ENCODE measurements at regions of chr12 and their contacts with region 1.

Region 1: DNA sequence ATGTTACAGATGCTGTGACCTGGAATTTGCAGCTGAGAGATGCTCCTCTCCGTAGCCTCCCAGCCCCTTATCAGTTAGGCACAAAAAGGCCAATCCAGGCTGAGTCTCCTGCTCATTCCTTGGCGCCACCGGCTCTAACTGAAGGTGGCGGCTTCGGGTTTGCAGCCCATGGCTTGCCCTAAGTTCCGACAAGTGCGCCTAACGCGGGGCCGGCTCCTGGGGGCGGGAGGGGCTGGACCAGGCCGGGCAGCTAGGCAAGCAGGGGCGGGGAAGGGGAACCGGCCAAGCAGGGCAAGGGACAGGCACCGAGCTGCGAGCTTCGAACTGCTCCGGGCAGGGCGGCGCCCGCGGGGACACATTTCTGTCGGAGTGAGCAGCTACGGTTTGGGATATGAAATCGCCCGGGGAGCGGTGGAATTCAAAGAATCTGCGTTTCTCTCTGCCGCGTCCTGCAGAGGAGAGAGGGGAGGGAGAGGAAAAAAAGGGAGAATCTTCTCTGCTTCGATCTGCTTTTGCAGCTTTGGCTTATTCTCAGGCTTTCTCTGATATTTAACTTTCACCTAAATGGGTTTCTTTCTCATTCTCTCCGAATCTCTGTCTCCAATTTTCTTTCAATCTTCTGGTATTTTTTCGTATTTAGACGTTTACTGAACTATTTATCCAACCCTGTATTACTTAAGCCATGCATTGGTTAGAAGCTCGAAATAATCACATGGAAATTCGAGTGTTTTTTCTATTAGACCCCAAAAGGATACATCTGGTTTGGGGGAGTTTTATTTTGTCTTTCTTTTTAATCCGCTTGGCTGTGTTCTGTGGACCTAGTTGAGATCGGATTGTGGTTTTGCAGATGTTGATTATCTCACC is 1.6 kb upstream of the HOXC12 start:
- DNase-seq: no peak
- H3K4me3 Mint-ChIP-seq: no peak overlapping the region
- H3K27ac Mint-ChIP-seq: peak overlapping the region; percentile 60
- H3K4me1 Mint-ChIP-seq: peaks cover 5% of the 10 kb centered on the region
- H3K27me3 Mint-ChIP-seq: peaks cover 83% of the 10 kb centered on the region

Region 2: GRCh38 chr12:53938326-53939140 is 14.6 kb before region 1 on chr12 and contains the start of gene HOXC13:
- intact Hi-C with region 1: loop called (anchors 2 kb)
- DNase-seq: no peak
- H3K4me3 Mint-ChIP-seq: no peak within 1 kb of the TSS
- H3K27ac Mint-ChIP-seq: no peak within 1 kb of the TSS
- H3K4me1 Mint-ChIP-seq: peaks cover 2% of the 10 kb centered on the region
- H3K27me3 Mint-ChIP-seq: peaks cover 85% of the 10 kb centered on the region
- total RNA-seq, gene HOXC13: not detected in 2 replicates

Region 3: GRCh38 chr12:53974084-53975063 is 21.3 kb after region 1 on chr12 and contains the start of gene HOTAIR:
- intact Hi-C with region 1: loop called (anchors 2 kb)
- DNase-seq: peak; percentile 72
- H3K4me3 Mint-ChIP-seq: peak within 1 kb of the TSS; percentile 36
- H3K27ac Mint-ChIP-seq: peak within 1 kb of the TSS; percentile 80
- H3K4me1 Mint-ChIP-seq: peaks cover 9% of the 10 kb centered on the region
- H3K27me3 Mint-ChIP-seq: peaks cover 89% of the 10 kb centered on the region
- total RNA-seq, gene HOTAIR: not detected in 2 replicates

Region 4: GRCh38 chr12:53995378-53996239 is 42.5 kb after region 1 on chr12:
- intact Hi-C with region 1: loop called (anchors 2 kb)
- DNase-seq: peak; percentile 74
- H3K4me3 Mint-ChIP-seq: peak overlapping the region; percentile 75
- H3K27ac Mint-ChIP-seq: no peak overlapping the region
- H3K4me1 Mint-ChIP-seq: peaks cover 18% of the 10 kb centered on the region
- H3K27me3 Mint-ChIP-seq: peaks cover 87% of the 10 kb centered on the region

Region 5: DNA sequence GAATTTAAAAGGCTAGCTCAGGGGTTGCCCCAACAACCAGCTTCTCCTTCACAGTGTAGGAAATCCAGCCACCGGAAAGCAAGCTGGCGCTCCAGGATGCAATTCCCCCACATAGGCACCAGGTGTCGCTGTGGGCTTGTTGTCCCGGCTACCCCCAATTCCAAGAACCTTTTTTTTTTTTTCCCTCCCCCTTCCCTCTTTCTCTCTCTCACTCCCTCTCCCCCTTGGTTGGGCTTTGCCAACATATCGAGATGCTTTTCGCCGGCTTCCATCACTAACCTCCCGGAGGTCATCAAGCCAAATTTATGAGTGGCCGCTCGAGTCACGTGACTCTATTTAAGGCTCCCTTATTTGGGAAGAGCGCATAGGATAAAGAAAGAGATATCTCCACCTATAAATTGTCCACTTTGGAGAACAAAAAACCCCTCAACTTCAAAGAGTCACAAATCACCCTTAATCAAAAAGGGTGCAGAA is 79.6 kb after region 1 on chr12 and contains the start of gene HOXC5:
- intact Hi-C with region 1: loop called (anchors 5 kb)
- DNase-seq: peak; percentile 90
- H3K4me3 Mint-ChIP-seq: peak within 1 kb of the TSS; percentile 69
- H3K27ac Mint-ChIP-seq: peak within 1 kb of the TSS; percentile 59
- H3K4me1 Mint-ChIP-seq: peaks cover 19% of the 10 kb centered on the region
- H3K27me3 Mint-ChIP-seq: peaks cover 83% of the 10 kb centered on the region
- total RNA-seq, gene HOXC5: not detected in 2 replicates

Region 6: DNA sequence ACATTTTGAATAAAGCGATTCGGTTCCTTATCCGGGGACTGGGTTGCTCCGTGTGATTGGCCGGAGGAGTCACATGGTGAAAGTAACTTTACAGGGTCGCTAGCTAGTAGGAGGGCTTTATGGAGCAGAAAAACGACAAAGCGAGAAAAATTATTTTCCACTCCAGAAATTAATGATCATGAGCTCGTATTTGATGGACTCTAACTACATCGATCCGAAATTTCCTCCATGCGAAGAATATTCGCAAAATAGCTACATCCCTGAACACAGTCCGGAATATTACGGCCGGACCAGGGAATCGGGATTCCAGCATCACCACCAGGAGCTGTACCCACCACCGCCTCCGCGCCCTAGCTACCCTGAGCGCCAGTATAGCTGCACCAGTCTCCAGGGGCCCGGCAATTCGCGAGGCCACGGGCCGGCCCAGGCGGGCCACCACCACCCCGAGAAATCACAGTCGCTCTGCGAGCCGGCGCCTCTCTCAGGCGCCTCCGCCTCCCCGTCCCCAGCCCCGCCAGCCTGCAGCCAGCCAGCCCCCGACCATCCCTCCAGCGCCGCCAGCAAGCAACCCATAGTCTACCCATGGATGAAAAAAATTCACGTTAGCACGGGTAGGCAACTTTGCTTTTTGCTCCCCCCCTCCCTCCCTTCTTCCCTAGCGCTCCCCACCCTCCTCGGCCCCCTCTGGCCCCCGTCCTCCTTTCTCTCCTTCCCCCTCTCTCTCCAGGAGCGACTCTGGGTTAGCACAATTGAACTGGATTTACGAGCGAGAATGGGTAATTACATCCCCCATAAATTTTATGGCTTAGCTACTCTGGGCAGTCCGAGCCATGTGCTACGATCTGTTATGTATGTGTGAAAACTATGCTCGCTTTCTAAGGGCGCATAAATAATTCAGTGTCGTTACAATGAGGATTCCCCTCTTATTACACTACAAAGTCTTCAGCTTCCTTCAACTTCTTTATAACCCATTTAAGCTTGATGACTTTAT is 100.9 kb after region 1 on chr12 and contains the start of gene HOXC4:
- intact Hi-C with region 1: loop called (anchors 5 kb)
- DNase-seq: no peak
- H3K4me3 Mint-ChIP-seq: peak within 1 kb of the TSS; percentile 71
- H3K27ac Mint-ChIP-seq: peak within 1 kb of the TSS; percentile 63
- H3K4me1 Mint-ChIP-seq: peaks cover 22% of the 10 kb centered on the region
- H3K27me3 Mint-ChIP-seq: peaks cover 88% of the 10 kb centered on the region
- total RNA-seq, gene HOXC4: not detected in 2 replicates